Activated naive CD4-positive, alpha-beta T cell treated with anti-CD3 and anti-CD28 coated beads for 36 hours (primary cell): ENCODE measurements at regions of chr18 and their contacts with region 1.

Region 1: GRCh38 chr18:35029770-35030169 is 11.4 kb upstream of the MAPRE2 start:
- DNase-seq: no peak
- H3K4me3 Mint-ChIP-seq: peak overlapping the region; percentile 70
- H3K27ac Mint-ChIP-seq: peak overlapping the region; percentile 92
- H3K4me1 Mint-ChIP-seq: peaks cover 61% of the 10 kb centered on the region
- H3K27me3 Mint-ChIP-seq: no peaks in the 10 kb centered on the region

Region 2: DNA sequence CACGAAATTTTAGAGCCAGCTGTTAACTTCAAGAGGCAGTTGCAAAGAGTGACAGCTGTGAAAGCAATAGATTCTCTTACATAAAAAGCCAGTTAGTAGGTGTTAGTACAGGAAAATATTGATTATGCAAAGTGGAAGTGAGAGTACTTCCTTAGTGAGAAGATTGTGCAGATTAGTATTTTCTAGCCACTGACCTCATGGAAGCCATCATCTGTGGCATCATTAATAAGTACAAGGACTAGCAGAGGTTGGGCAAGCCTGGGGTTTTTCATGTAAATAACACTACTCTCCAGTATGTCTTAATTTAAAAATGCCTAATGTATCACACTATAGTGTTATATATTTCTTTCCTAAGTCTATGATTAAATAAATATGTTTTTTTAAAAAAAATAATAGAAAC is 485.8 kb before region 1 on chr18:
- CTCF ChIA-PET with region 1: no interaction called
- intact Hi-C with region 1: no loop called
- DNase-seq: no peak
- H3K4me3 Mint-ChIP-seq: no peak overlapping the region
- H3K27ac Mint-ChIP-seq: no peak overlapping the region
- H3K4me1 Mint-ChIP-seq: no peaks in the 10 kb centered on the region
- H3K27me3 Mint-ChIP-seq: no peaks in the 10 kb centered on the region

Region 3: GRCh38 chr18:34965108-34965507 is 64.7 kb before region 1 on chr18:
- CTCF ChIA-PET with region 1: no interaction called
- intact Hi-C with region 1: no loop called
- DNase-seq: no peak
- H3K4me3 Mint-ChIP-seq: no peak overlapping the region
- H3K27ac Mint-ChIP-seq: no peak overlapping the region
- H3K4me1 Mint-ChIP-seq: no peaks in the 10 kb centered on the region
- H3K27me3 Mint-ChIP-seq: peaks cover 4% of the 10 kb centered on the region

Region 4: GRCh38 chr18:34976899-34977837 is 52.6 kb before region 1 on chr18:
- CTCF ChIA-PET with region 1: interaction called, 4 read pairs
- intact Hi-C with region 1: loop called (anchors 2 kb)
- DNase-seq: peak; percentile 79
- H3K4me3 Mint-ChIP-seq: peak overlapping the region; percentile 85
- H3K27ac Mint-ChIP-seq: no peak overlapping the region
- H3K4me1 Mint-ChIP-seq: peaks cover 23% of the 10 kb centered on the region
- H3K27me3 Mint-ChIP-seq: peaks cover 5% of the 10 kb centered on the region

Region 5: GRCh38 chr18:35095983-35096676 is 66.4 kb after region 1 on chr18:
- CTCF ChIA-PET with region 1: interaction called, 7 read pairs
- intact Hi-C with region 1: loop called (anchors 2 kb)
- DNase-seq: no peak
- H3K4me3 Mint-ChIP-seq: no peak overlapping the region
- H3K27ac Mint-ChIP-seq: peak overlapping the region; percentile 0
- H3K4me1 Mint-ChIP-seq: peaks cover 43% of the 10 kb centered on the region
- H3K27me3 Mint-ChIP-seq: no peaks in the 10 kb centered on the region

Region 6: GRCh38 chr18:35185771-35186170 is 156.0 kb after region 1 on chr18:
- CTCF ChIA-PET with region 1: interaction called, 6 read pairs
- intact Hi-C with region 1: loop called (anchors 2 kb)
- DNase-seq: peak; percentile 18
- H3K4me3 Mint-ChIP-seq: no peak overlapping the region
- H3K27ac Mint-ChIP-seq: no peak overlapping the region
- H3K4me1 Mint-ChIP-seq: no peaks in the 10 kb centered on the region
- H3K27me3 Mint-ChIP-seq: no peaks in the 10 kb centered on the region

Region 7: DNA sequence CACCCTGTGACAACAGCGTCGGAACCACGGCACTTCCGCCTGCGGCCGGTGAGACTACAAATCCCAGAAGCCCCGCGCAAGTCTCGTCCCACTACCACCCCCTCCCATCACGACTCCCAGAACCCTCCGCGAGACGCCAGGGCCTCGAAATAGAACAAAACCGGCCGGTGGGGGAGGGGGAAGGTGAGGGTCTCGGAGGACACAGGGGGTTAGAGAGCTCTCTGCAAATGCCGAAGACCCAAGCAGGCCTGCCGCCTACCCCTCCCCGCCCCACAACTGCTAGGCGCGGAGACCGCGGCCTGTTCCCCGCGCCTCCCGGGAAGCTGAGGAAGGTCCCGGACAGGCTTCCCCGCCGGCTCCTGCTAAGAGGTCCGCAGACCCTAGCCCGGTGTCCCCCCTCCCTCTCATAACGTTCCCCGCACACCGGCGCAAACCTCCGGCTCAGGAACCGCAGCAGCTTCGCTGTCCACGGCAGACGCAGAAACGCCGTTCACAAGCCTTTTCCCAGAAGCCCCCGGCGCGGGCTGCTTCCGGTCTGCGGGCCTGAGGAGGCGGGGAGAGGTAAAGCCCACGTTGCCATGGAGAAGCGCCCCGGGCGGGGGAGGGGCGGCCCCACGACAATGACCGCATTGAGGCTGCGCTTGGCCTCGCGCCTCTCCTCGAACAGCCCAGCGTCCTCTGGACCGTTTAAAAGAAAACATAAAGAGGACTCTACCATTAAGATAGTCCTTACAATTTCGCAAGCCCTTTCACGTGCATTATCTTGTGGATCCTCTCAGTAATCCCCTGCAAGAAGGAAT is 314.4 kb after region 1 on chr18 and contains the start of gene ZNF24:
- CTCF ChIA-PET with region 1: no interaction called
- intact Hi-C with region 1: loop called (anchors 5 kb)
- DNase-seq: peak; percentile 94
- H3K4me3 Mint-ChIP-seq: peak within 1 kb of the TSS; percentile 92
- H3K27ac Mint-ChIP-seq: peak within 1 kb of the TSS; percentile 92
- H3K4me1 Mint-ChIP-seq: peaks cover 43% of the 10 kb centered on the region
- H3K27me3 Mint-ChIP-seq: no peaks in the 10 kb centered on the region
- total RNA-seq, gene ZNF24: 46.8 to 47.8 TPM